Dorsolateral prefrontal cortex (tissue), 120 donors: ENCODE measurements at regions of chr1 and their contacts with region 1.

Region 1: DNA sequence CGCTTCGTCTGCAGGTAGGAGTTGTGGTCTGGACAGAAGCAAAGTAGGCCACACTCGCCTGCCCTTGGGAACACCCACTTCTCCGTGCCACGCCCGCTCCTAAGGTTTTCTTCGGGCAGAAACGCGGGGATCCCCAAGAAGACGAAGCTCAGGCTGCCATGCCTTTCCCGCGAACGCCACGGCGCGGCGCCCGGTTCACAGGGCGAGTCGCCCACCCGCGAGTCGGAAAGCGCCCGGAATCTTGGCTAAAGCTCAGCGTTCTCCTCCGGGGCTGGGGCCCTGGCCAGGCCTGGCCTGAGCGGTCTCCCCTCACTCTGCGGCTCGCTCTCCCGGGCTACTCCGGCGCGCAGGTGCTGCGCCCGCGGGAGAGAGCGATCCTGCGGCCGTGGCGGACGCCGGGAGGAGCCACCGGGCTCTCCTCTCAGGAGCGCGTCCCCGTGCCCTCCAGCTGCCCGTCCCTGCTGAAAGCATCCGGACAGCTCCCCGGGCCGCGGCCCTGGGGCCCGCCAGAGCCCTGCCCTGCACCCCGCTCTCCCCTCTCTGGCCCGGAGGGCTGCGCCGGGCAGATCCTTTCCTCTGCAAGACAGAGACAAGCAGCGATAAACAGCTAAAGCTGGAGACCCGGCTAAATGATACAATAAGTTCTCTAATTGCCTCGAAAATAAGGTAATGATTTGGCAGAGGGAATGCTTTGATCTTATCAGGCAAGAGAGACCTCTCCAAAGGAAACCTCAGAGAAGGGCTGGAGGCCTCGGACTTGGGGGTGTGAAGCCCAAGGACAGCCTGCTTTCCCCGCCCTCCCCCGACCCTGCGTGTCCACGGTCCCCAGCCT is 6.7 kb upstream of the WNT2B start:
- DNase-seq: peak; percentile 60 to 86 (median 80)
- H3K4me3 ChIP-seq: peak overlapping the region; percentile 47 to 87 (median 72)
- H3K27ac ChIP-seq: peak overlapping the region in 44 of 59 donors; percentile 3 to 87 (median 62)
- H3K27me3 ChIP-seq: no peaks in the 10 kb centered on the region
- CTCF ChIP-seq: peak in 55 of 56 donors; percentile 45 to 81 (median 68)

Region 2: GRCh38 chr1:112418099-112418892 is 83.7 kb before region 1 on chr1:
- intact Hi-C with region 1: no loop called
- DNase-seq: no peak
- H3K4me3 ChIP-seq: no peak overlapping the region
- H3K27ac ChIP-seq: no peak overlapping the region
- H3K27me3 ChIP-seq: no peaks in the 10 kb centered on the region
- CTCF ChIP-seq: no peak

Region 3: DNA sequence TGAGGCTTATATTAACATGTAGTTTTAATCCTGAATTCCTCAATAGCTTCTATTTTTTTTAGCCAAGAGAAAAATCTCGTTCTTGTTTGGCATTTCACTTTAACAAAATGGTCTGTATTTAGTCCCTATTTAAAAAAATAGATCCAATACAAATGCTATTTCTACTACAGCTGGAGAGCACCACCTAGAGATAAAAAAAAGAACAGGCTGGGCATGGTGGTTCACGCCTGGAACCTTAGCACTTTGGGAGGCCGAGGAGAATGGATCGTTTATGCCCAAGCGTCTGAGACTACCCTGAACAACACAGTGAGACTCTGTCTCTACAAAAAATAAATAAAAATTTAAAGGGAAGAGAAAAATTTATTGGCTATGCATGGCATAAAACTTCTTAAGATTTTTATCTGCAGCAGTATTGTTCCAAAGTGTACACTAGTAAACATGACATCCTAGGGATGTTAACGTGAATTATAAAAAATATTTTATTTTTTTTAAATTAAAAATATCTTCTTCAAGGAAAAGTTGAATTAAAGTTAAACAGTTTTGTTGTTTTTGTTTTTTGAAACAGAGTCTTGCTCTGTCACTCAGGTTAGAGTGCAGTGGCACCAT is 112.5 kb after region 1 on chr1:
- intact Hi-C with region 1: loop called in 1 of 2 experiments (anchors 5 kb)
- DNase-seq: no peak
- H3K4me3 ChIP-seq: no peak overlapping the region
- H3K27ac ChIP-seq: no peak overlapping the region
- H3K27me3 ChIP-seq: no peaks in the 10 kb centered on the region
- CTCF ChIP-seq: peak in 53 of 56 donors; percentile 10 to 64 (median 38)